Heart left ventricle (tissue), 16 donors: ENCODE measurements at regions of chr5 and their contacts with region 1.

Region 1: DNA sequence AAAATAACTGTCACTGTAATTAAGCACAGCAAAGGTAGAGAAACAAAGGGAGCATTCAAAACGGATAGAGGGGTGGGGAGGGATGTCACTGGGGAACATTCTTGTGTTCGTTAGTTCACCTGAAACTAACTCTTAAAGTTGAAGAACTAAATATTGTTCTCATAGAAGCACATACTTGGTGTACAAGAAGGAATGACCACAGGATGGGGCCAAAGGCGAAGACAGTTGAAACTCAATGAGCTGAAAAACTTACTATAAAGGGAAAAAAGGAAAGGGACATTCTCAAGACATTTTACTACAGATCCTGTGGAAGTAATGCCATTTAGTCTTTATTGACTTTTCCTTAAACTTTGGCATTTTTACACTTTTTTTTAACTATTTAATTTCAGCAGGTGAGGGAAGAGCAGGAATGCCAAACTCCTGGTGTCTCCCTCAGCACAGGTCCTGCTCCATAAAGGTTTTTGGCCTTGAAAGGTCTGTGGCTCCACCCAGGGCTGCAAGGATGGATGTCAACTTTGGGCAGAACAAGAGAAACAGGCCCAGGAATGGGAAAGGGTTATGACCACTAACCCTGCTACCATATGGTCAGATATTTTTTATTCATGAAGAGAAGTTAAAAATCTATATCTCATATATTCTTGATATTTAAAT is 197.6 kb upstream of the RASA1 start:
- DNase-seq: peak in 2 of 5 donors; percentile 19 to 33
- ATAC-seq: peak in 2 of 4 donors; percentile 48 to 56
- H3K4me3 ChIP-seq: no peak overlapping the region
- H3K27ac ChIP-seq: no peak overlapping the region
- H3K4me1 ChIP-seq: no peaks in the 10 kb centered on the region
- H3K27me3 ChIP-seq: no peaks in the 10 kb centered on the region
- CTCF ChIP-seq: peak; percentile 17 to 61 (median 34)
- POLR2A ChIP-seq: no peak

Region 2: DNA sequence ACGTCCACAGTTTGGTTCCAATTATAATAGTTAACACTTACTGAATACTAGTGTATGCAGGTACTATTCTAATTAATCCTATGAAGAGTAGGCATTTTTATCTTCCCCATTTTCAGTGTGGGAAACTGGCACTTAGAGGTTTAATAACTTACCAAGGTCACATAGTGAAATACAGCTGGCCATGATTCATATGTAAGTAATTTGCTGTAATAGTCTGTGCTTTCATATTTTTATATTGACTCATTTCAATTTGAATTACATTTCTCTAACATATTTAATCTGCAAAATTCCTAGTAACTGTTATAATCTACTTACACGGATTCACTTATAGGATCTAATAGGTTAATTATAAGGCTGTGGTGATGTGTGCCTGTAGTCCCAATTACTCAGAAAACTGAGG is 323.2 kb after region 1 on chr5:
- intact Hi-C with region 1: loop called in 2 of 10 experiments (anchors 10 kb)
- DNase-seq: no peak
- ATAC-seq: peak in 1 of 4 donors; percentile 59
- H3K4me3 ChIP-seq: no peak overlapping the region
- H3K27ac ChIP-seq: peak overlapping the region in 2 of 12 donors; percentile 4 to 25
- H3K4me1 ChIP-seq: peaks cover 0 to 13% (median 4%) of the 10 kb centered on the region in 12 donors
- H3K27me3 ChIP-seq: no peaks in the 10 kb centered on the region
- CTCF ChIP-seq: no peak
- POLR2A ChIP-seq: no peak

Region 3: DNA sequence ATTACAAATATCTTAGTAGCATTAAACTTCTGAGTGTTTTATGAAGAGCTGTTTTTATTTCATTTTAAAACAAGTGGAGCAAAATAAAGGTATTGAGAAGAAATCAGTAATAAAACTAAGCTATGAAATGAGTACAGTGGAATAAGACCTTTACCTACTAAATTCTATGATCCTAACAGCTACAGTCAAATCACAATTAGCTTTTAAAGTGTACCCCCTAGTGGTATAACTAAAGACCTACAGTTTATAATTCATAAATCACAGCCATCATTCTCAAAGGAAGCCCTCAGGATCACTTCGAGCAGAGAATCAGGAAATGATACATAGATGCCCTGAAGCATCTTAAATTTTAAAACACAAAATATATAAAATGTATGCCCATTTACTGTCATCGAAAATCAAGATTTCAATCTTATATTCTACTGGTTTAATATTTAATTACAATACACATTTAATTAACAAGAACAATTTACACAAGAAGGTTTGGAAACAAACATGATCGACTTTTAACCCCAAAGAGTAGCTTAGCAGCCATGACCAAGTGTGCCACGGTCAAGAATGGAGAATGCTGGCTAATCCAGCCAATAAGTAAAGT is 330.3 kb after region 1 on chr5:
- intact Hi-C with region 1: loop called in 7 of 10 experiments (anchors 5 to 10 kb)
- DNase-seq: no peak
- ATAC-seq: peak in 2 of 4 donors; percentile 58 to 74
- H3K4me3 ChIP-seq: no peak overlapping the region
- H3K27ac ChIP-seq: no peak overlapping the region
- H3K4me1 ChIP-seq: peaks cover 0 to 25% (median 0%) of the 10 kb centered on the region in 12 donors
- H3K27me3 ChIP-seq: no peaks in the 10 kb centered on the region
- CTCF ChIP-seq: peak; percentile 51 to 81 (median 74)
- POLR2A ChIP-seq: no peak